ENCODE measurements at regions of chr1 and their contacts with region 1.

Region 1: GRCh38 chr1:202315576-202316168 is 26.1 kb downstream of the UBE2T start:
- DNase-seq: peak; percentile 92
- H3K4me3 Mint-ChIP-seq: no peak overlapping the region
- H3K27ac Mint-ChIP-seq: no peak overlapping the region
- H3K4me1 Mint-ChIP-seq: no peaks in the 10 kb centered on the region
- H3K27me3 Mint-ChIP-seq: no peaks in the 10 kb centered on the region
- CTCF ChIP-seq: peak; percentile 99

Region 2: GRCh38 chr1:201108614-201109013 is 1207.1 kb before region 1 on chr1:
- CTCF ChIA-PET with region 1: no interaction called
- POLR2A ChIA-PET with region 1: no interaction called
- intact Hi-C with region 1: no loop called
- DNase-seq: no peak
- H3K4me3 Mint-ChIP-seq: no peak overlapping the region
- H3K27ac Mint-ChIP-seq: no peak overlapping the region
- H3K4me1 Mint-ChIP-seq: no peaks in the 10 kb centered on the region
- H3K27me3 Mint-ChIP-seq: no peaks in the 10 kb centered on the region
- CTCF ChIP-seq: no peak

Region 3: GRCh38 chr1:202184750-202185460 is 130.8 kb before region 1 on chr1:
- CTCF ChIA-PET with region 1: interaction called, 954 read pairs
- POLR2A ChIA-PET with region 1: interaction called, 11 read pairs
- intact Hi-C with region 1: loop called (anchors 1 kb)
- DNase-seq: peak; percentile 96
- H3K4me3 Mint-ChIP-seq: no peak overlapping the region
- H3K27ac Mint-ChIP-seq: no peak overlapping the region
- H3K4me1 Mint-ChIP-seq: peaks cover 13% of the 10 kb centered on the region
- H3K27me3 Mint-ChIP-seq: peaks cover 50% of the 10 kb centered on the region
- CTCF ChIP-seq: peak; percentile 100

Region 4: GRCh38 chr1:202213361-202214088 is 102.1 kb before region 1 on chr1:
- CTCF ChIA-PET with region 1: interaction called, 29 read pairs
- POLR2A ChIA-PET with region 1: no interaction called
- intact Hi-C with region 1: loop called (anchors 1 kb)
- DNase-seq: peak; percentile 59
- H3K4me3 Mint-ChIP-seq: peak overlapping the region; percentile 58
- H3K27ac Mint-ChIP-seq: peak overlapping the region; percentile 3
- H3K4me1 Mint-ChIP-seq: peaks cover 16% of the 10 kb centered on the region
- H3K27me3 Mint-ChIP-seq: peaks cover 67% of the 10 kb centered on the region
- CTCF ChIP-seq: peak; percentile 34

Region 5: GRCh38 chr1:202255343-202255742 is 60.3 kb before region 1 on chr1:
- CTCF ChIA-PET with region 1: interaction called, 10 read pairs
- POLR2A ChIA-PET with region 1: no interaction called
- intact Hi-C with region 1: no loop called
- DNase-seq: no peak
- H3K4me3 Mint-ChIP-seq: no peak overlapping the region
- H3K27ac Mint-ChIP-seq: no peak overlapping the region
- H3K4me1 Mint-ChIP-seq: peaks cover 9% of the 10 kb centered on the region
- H3K27me3 Mint-ChIP-seq: peaks cover 47% of the 10 kb centered on the region
- CTCF ChIP-seq: no peak

Region 6: DNA sequence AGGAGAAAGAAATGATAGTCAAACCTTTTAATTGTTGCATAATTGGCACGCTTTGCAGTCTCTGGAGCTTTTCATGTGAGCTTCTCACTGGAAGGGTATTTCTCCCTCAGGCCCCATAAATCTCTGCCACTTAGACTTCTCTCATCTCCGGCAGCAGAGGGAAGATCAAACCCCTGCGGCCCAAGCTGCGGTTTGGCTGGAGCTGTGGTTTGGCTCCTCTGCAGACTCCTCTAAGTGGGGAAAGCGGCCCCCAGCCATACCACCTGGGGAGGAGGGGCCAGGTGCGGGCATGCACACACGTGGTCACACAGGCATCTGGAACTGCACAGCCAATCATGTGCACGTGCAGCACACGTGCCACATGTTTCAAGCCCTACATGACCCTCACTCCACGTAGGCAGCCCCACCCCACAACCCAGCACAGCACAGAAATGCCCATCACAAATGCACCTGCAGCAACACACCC is 32.3 kb before region 1 on chr1:
- CTCF ChIA-PET with region 1: interaction called, 32 read pairs
- POLR2A ChIA-PET with region 1: interaction called, 3 read pairs
- intact Hi-C with region 1: loop called (anchors 2 kb)
- DNase-seq: peak; percentile 100
- H3K4me3 Mint-ChIP-seq: peak overlapping the region; percentile 5
- H3K27ac Mint-ChIP-seq: peak overlapping the region; percentile 82
- H3K4me1 Mint-ChIP-seq: peaks cover 56% of the 10 kb centered on the region
- H3K27me3 Mint-ChIP-seq: peaks cover 14% of the 10 kb centered on the region
- CTCF ChIP-seq: no peak

Region 7: GRCh38 chr1:202304375-202304774 is 11.3 kb before region 1 on chr1:
- CTCF ChIA-PET with region 1: interaction called, 105 read pairs
- POLR2A ChIA-PET with region 1: no interaction called
- intact Hi-C with region 1: no loop called
- DNase-seq: no peak
- H3K4me3 Mint-ChIP-seq: no peak overlapping the region
- H3K27ac Mint-ChIP-seq: no peak overlapping the region
- H3K4me1 Mint-ChIP-seq: no peaks in the 10 kb centered on the region
- H3K27me3 Mint-ChIP-seq: no peaks in the 10 kb centered on the region
- CTCF ChIP-seq: no peak

Region 8: DNA sequence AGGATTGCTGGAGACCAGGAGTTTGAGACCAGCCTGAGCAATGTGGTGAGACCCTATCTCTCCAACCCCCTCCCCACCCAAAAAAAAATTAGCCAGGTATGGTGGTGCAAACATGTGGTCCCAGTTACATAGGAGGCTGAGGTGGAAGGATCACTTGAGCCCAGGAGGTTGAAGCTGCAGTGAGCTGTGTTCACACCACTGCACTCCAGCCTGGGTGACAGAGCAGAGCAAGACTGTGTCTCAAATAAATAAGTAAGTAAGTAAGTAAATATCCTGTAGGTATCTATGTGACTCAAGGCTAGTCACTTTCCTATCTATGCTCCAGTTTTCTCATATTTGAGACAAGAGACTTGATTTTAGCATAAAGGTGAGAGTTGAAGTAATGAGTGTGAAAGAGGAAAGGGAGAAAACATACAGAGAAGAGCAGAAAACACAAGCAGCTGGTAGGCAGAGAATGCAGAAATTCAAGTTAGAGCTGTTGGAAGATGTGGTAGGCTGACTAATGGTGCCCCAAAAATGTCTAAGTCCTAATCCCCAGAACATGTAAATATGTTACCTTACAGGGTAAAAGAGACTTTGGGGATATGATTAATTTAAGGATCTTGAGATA is 40.4 kb after region 1 on chr1:
- CTCF ChIA-PET with region 1: no interaction called
- POLR2A ChIA-PET with region 1: no interaction called
- intact Hi-C with region 1: no loop called
- DNase-seq: no peak
- H3K4me3 Mint-ChIP-seq: no peak overlapping the region
- H3K27ac Mint-ChIP-seq: no peak overlapping the region
- H3K4me1 Mint-ChIP-seq: peaks cover 12% of the 10 kb centered on the region
- H3K27me3 Mint-ChIP-seq: no peaks in the 10 kb centered on the region
- CTCF ChIP-seq: no peak

Region 9: DNA sequence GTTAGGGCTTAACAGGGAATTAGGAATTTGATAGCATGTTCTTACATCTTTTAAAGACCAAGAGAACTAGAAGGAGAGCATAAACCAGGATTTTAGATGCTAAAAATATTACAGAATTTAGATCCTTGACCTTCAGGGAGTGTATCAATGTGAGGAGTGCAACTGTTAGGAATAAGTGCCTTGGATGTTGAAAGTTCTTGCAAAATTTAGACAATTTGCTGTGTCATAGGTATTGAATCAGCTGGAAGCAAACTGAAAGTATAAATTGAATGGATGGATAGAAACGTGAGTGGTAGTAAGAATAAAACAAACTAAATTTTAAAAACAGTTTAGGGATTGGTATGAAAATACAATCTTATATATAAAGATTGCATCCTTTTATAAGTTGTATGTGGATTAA is 60.6 kb after region 1 on chr1:
- CTCF ChIA-PET with region 1: no interaction called
- POLR2A ChIA-PET with region 1: no interaction called
- intact Hi-C with region 1: no loop called
- DNase-seq: peak; percentile 58
- H3K4me3 Mint-ChIP-seq: peak overlapping the region; percentile 26
- H3K27ac Mint-ChIP-seq: peak overlapping the region; percentile 35
- H3K4me1 Mint-ChIP-seq: peaks cover 46% of the 10 kb centered on the region
- H3K27me3 Mint-ChIP-seq: no peaks in the 10 kb centered on the region
- CTCF ChIP-seq: no peak

Region 10: DNA sequence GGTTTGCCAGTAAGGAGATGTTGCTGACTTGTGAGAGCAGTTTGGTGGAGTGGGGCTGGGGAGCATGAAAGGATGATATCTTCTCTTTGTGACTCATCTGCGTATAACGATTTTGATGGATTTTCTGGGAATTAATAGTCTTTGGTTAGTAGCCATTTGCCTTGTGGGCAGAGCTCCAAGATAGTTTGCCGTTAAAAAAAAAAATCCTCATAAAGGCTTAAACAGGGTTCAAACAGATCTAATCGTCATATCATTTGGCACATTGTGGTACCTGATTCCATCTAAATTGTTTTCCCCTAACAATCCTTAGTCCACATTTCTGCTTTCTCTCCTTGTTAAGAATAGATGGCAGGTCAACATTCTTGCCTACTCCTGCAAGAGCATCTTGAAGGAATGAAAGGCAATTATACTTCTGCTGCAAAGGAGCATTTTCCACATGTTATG is 200.8 kb after region 1 on chr1:
- CTCF ChIA-PET with region 1: no interaction called
- POLR2A ChIA-PET with region 1: no interaction called
- intact Hi-C with region 1: no loop called
- DNase-seq: no peak
- H3K4me3 Mint-ChIP-seq: no peak overlapping the region
- H3K27ac Mint-ChIP-seq: no peak overlapping the region
- H3K4me1 Mint-ChIP-seq: no peaks in the 10 kb centered on the region
- H3K27me3 Mint-ChIP-seq: no peaks in the 10 kb centered on the region
- CTCF ChIP-seq: no peak

Region 11: GRCh38 chr1:202710070-202711045 is 394.7 kb after region 1 on chr1 and contains the start of gene SYT2:
- CTCF ChIA-PET with region 1: interaction called, 3 read pairs
- POLR2A ChIA-PET with region 1: no interaction called
- intact Hi-C with region 1: loop called (anchors 10 kb)
- DNase-seq: no peak
- H3K4me3 Mint-ChIP-seq: no peak within 1 kb of the TSS
- H3K27ac Mint-ChIP-seq: no peak within 1 kb of the TSS
- H3K4me1 Mint-ChIP-seq: no peaks in the 10 kb centered on the region
- H3K27me3 Mint-ChIP-seq: peaks cover 88% of the 10 kb centered on the region
- CTCF ChIP-seq: no peak
- total RNA-seq, gene SYT2: not detected in 2 replicates

Measured in MCF 10A (cell line).